ENCODE measurements at regions of chr1 and their contacts with region 1.

Region 1: DNA sequence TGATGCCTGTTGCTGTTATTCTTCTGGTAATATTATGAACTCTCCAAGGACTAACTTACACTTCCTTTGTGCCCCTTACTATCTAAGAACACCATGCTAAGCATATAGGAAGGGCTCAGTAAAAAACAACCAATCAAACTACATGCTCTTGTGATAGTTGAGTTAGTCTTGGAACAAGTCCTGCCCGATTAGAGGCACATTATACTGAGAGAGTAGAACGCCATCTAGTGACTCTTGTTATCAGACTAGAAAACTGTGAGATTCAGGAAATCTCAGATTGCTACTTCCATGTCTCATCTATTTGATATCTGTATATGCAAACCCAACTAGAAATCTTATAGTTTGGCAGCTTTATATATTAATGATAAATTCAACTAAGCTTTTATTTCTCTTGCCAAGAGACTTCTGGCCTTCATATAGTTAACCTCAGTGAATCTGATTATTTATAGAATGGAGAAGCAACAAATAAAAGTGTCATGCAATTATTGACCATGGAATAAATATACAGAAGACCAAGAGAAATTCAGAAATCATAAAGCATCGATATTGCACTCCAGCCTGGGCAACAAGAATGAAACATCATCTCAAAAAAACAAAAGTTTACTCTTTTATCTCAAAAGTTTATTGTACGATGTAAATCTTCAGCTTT is 7.8 kb upstream of the SRRM1 start:
- DNase-seq: peak in 1 of 6 donors; percentile 19
- ATAC-seq: peak; percentile 85 to 98 (median 94)
- H3K4me3 ChIP-seq: peak overlapping the region in 1 of 4 donors; percentile 0
- H3K27ac ChIP-seq: no peak overlapping the region
- H3K4me1 ChIP-seq: no peaks in the 10 kb centered on the region
- H3K27me3 ChIP-seq: no peaks in the 10 kb centered on the region
- CTCF ChIP-seq: peak in 3 of 4 donors; percentile 30 to 43 (median 33)

Region 2: GRCh38 chr1:24415334-24415909 is 219.9 kb before region 1 on chr1 and contains the start of gene NIPAL3:
- intact Hi-C with region 1: loop called in 1 of 3 experiments (anchors 10 kb)
- DNase-seq: peak; percentile 93 to 99 (median 99)
- ATAC-seq: peak; percentile 85 to 93 (median 89)
- H3K4me3 ChIP-seq: peak within 1 kb of the TSS; percentile 44 to 77 (median 54)
- H3K27ac ChIP-seq: peak within 1 kb of the TSS; percentile 64 to 84 (median 74)
- H3K4me1 ChIP-seq: peaks cover 18 to 41% (median 36%) of the 10 kb centered on the region in 3 donors
- H3K27me3 ChIP-seq: no peaks in the 10 kb centered on the region
- CTCF ChIP-seq: peak; percentile 85 to 93 (median 92)
- total RNA-seq, gene NIPAL3: 16.1 to 25.4 (median 19.3) TPM

Region 3: GRCh38 chr1:24541711-24542346 is 93.5 kb before region 1 on chr1:
- intact Hi-C with region 1: loop called in 1 of 3 experiments (anchors 10 kb)
- DNase-seq: peak in 2 of 6 donors; percentile 46 to 78
- ATAC-seq: peak; percentile 65 to 81 (median 76)
- H3K4me3 ChIP-seq: no peak overlapping the region
- H3K27ac ChIP-seq: peak overlapping the region in 3 of 4 donors; percentile 51 to 67 (median 66)
- H3K4me1 ChIP-seq: peaks cover 5 to 14% (median 11%) of the 10 kb centered on the region in 3 donors
- H3K27me3 ChIP-seq: no peaks in the 10 kb centered on the region
- CTCF ChIP-seq: peak in 3 of 4 donors; percentile 57 to 60 (median 59)

Region 4: DNA sequence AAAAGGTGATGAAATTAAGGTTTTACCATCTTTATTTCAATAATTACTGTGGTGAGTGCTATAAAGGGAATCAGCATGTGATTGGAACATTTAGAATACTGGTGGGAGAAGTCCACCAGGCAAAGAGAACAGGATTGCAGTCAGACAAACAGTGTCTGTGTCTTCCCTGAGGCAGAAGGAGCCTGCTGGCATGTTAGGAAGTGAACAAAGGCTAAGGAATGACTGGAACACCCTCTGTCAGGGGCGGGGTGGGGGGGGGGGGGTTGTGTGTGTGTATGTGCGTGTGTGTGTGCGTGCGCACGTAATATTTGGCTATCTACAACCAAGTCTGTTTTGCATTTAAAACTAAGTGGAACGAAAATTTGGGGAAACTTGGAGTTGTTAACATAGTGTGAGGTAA is 38.0 kb after region 1 on chr1:
- intact Hi-C with region 1: no loop called
- DNase-seq: no peak
- ATAC-seq: no peak
- H3K4me3 ChIP-seq: no peak overlapping the region
- H3K27ac ChIP-seq: no peak overlapping the region
- H3K4me1 ChIP-seq: no peaks in the 10 kb centered on the region
- H3K27me3 ChIP-seq: no peaks in the 10 kb centered on the region
- CTCF ChIP-seq: no peak